Activated CD4-positive, alpha-beta memory T cell treated with anti-CD3 and anti-CD28 coated beads for 36 hours (primary cell): ENCODE measurements at regions of chr19 and their contacts with region 1.

Region 1: DNA sequence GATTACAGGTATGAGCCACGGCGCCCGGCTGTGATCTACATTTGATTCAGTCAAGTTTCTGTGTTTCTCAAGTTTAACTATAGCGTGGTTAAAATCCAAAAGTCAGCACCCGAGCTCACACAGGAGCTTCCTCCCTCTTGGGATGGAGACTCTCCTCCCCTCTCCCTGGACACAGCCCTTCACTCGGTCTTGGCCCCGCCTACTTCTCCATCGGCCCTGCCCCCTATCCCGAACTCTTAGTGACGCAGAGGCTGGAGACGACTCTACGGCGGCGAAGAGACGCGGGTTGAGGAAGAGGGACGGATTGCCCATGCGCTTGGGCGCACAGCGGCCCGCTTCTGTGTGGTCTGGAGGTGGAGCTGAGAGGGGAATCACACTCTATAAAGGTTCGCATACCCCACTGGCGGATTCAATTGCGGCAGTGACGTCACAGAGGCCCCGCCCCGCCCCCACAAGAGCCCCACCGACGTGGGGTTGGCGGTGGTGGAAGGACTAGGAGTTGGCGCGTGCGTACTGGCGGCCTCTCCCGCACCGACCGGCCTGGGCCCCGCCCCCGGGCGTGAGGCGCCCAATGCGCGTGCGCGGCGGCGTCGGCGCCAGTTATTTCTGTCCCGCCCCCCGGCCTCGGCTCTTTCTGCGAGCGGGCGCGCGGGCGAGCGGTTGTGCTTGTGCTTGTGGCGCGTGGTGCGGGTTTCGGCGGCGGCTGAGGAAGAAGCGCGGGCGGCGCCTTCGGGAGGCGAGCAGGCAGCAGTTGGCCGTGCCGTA is at the start of gene TRIM28:
- DNase-seq: peak; percentile 100
- H3K4me3 Mint-ChIP-seq: peak within 1 kb of the TSS; percentile 97
- H3K27ac Mint-ChIP-seq: peak within 1 kb of the TSS; percentile 95
- H3K4me1 Mint-ChIP-seq: peaks cover 32% of the 10 kb centered on the region
- H3K27me3 Mint-ChIP-seq: peaks cover 7% of the 10 kb centered on the region
- total RNA-seq, gene TRIM28: 404 to 408 TPM

Region 2: DNA sequence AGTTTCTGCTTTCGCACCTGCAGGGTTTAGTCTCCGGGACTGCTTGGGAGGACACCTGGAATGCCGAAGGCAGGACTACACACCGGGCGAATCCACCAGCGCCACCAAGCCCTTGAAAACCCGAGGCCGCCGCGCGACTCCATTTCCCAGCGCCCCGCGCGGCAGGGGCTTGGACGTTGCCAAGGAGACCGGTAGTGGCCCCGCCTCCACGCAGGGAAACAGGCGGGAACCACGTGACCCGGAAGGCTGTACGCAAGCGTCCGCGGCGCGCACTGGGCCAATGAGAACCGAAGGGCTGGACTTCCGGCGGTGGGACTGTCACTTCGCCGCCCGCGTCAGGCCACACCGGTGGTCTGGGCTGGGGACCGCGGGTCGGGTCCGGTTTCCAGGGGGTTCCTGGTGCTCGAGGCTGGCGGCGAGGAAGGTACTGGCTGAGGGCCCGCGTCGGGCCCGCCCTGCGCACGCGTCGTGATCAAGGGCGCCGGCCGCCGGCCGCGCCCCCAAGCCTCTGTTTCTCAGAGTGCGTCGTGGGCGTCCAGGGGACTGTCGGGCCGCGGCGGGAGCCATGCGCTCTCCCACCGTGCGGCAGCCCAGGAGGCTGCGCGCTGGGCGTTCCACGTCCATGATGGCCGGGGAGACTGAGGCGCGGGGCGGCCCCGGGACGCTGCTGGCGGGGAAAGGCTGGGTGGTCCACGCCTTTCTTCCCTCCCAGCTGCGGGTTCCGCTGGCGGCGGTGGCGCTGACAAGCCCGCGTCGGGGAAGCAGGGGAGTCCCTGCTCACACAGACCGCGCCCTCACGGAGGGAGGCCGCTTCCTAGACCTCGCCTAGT is 77.0 kb before region 1 on chr19 and contains the start of gene ZNF324:
- CTCF ChIA-PET with region 1: no interaction called
- POLR2A ChIA-PET with region 1: no interaction called
- intact Hi-C with region 1: loop called (anchors 2 kb)
- DNase-seq: peak; percentile 99
- H3K4me3 Mint-ChIP-seq: peak within 1 kb of the TSS; percentile 83
- H3K27ac Mint-ChIP-seq: peak within 1 kb of the TSS; percentile 62
- H3K4me1 Mint-ChIP-seq: peaks cover 17% of the 10 kb centered on the region
- H3K27me3 Mint-ChIP-seq: no peaks in the 10 kb centered on the region
- total RNA-seq, gene ZNF324: 7.0 to 8.3 TPM

Region 3: DNA sequence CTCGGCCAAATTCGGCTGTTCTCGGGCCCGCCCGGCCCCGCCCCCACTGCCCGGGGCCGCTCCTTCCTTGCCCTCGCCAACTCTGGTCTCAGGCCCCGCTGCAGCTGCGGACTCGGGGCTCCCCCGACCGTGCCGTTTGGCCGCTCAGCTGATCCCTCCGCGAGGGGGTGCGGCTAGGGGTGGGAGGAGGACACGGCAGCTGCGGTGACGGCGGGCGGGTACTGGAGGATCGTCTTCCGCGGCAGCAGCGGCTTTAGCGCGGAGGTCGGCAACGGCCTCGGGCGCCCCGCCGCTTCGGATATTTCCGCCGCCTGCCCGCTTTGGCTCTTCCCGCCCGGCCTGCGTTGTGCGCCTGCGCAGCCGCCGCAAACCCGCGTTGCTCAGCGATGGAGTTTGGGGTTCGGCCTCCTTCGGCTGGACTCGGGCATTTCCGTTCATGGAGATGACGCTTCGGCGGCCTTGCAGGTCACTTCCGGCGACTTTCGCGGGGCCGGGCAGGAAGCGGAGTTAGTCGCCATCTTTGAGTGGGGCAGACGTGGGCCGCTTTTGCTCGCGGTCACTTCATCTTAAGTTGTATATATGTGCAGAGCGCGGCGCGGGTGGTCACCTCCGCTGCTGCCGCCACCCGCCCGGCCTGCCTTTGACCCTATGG is 14.7 kb after region 1 on chr19:
- CTCF ChIA-PET with region 1: interaction called, 6 read pairs
- POLR2A ChIA-PET with region 1: interaction called, 41 read pairs
- intact Hi-C with region 1: loop called (anchors 1 kb)
- DNase-seq: peak; percentile 100
- H3K4me3 Mint-ChIP-seq: peak overlapping the region; percentile 99
- H3K27ac Mint-ChIP-seq: peak overlapping the region; percentile 100
- H3K4me1 Mint-ChIP-seq: peaks cover 58% of the 10 kb centered on the region
- H3K27me3 Mint-ChIP-seq: no peaks in the 10 kb centered on the region

Region 4: DNA sequence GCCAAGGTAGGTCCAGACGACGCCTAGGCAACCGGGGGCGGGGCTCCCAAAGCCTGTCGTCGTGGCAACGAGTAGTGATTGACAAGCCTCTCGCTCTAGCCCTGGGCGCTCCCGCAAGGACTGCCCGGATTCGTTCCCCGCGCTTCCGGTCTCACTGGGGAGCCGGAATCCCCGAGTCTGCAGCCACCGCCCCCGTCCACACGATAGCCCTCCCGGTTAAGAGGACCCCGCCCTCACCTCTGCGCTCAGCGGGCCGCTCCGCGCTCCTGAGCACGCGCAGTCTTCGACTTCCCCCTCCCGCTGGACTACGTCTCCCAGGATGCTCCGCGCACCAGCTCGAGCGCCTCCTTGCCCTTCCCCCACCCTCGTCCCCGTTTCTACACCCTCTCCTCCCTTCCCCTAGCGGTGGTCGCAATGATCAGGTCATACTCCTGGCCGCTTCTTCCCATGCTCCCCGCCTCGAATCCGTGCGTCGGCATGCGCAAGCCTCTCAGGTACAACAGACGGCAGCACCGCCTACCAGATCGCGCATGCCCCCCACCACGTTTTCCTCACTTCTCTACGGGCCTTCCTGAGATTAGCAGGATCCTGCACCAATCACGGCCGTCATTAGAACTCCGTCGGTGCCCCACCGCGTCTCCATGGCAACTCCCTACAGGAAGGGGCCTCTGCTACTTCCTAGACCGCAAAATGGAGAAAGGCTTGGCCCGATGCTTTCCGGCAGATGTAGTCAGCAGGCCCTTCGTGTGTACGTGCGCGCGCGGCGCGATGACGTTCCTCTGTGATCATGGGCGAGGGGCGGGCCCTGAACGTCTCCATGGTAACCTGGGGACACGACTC is 29.0 kb after region 1 on chr19 and contains the start of gene MZF1:
- CTCF ChIA-PET with region 1: no interaction called
- POLR2A ChIA-PET with region 1: interaction called, 13 read pairs
- intact Hi-C with region 1: loop called (anchors 1 kb)
- DNase-seq: peak; percentile 100
- H3K4me3 Mint-ChIP-seq: peak within 1 kb of the TSS; percentile 96
- H3K27ac Mint-ChIP-seq: peak within 1 kb of the TSS; percentile 100
- H3K4me1 Mint-ChIP-seq: peaks cover 33% of the 10 kb centered on the region
- H3K27me3 Mint-ChIP-seq: no peaks in the 10 kb centered on the region
- total RNA-seq, gene MZF1: 13.3 to 14.4 TPM